CD8-positive, alpha-beta T cell (primary cell): ENCODE measurements at regions of chrX and their contacts with region 1.

Region 1: DNA sequence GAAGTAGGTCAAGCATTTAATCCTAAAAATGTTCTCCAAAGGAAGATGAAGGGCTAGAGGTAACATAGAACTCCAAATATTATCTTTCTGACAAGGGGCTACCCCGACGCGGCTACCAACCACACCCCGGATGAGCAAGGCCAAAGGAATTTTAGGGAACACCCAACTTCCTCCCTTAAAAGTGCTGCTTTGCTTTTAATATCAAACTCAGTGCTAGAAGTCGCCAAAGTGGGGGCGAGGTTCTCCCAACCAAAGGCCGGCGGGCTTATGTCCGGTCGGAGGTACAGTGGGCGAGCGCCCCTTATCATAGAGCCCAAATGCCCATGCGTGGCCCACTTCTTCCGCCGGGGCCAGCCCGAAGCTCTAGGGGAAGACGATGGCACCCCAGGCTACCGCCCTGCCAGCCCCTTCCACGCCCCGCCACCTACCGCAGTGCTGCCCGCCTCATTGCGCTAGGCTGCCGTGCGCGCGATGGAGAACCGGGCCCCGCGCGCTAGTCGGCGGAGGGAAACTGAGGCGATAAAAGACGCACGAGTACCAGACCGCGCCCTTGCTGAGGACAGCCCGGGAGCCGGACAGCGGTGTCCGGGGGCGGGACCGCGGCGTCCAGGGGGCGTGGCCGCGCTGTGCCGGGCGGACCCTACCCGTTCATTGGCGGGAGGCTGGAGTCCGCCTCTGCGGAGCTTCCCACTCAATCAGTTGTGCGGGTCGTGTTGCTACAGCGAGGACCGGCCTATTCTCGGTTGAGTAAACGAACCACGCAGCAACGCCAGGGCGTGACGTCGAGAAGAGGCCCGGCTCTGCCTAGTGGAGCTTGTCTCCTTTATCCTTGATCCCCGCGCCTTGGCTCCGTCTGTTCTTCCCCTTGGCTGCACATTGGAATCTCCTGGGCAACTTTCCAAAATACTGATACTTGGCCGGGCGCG is at the start of gene ACOT9:
- DNase-seq: peak; percentile 32 to 83 (median 60)
- ATAC-seq: peak; percentile 87
- H3K4me3 ChIP-seq: peak within 1 kb of the TSS; percentile 72 to 75
- H3K4me3 Mint-ChIP-seq: peak within 1 kb of the TSS; percentile 87
- H3K27ac ChIP-seq: peak within 1 kb of the TSS; percentile 51 to 66
- H3K27ac Mint-ChIP-seq: peak within 1 kb of the TSS; percentile 84
- H3K4me1 ChIP-seq: peaks cover 8% of the 10 kb centered on the region
- H3K4me1 Mint-ChIP-seq: peaks cover 35% of the 10 kb centered on the region
- H3K27me3 ChIP-seq: no peaks in the 10 kb centered on the region
- H3K27me3 Mint-ChIP-seq: no peaks in the 10 kb centered on the region
- CTCF ChIP-seq: no peak
- total RNA-seq, gene ACOT9: 19.3 to 21.3 TPM

Region 2: GRCh38 chrX:23633834-23634580 is 109.0 kb before region 1 on chrX:
- CTCF ChIA-PET with region 1: no interaction called
- POLR2A ChIA-PET with region 1: no interaction called
- intact Hi-C with region 1: no loop called
- DNase-seq: no peak
- ATAC-seq: no peak
- H3K4me3 ChIP-seq: no peak overlapping the region
- H3K4me3 Mint-ChIP-seq: no peak overlapping the region
- H3K27ac ChIP-seq: no peak overlapping the region
- H3K27ac Mint-ChIP-seq: no peak overlapping the region
- H3K4me1 ChIP-seq: no peaks in the 10 kb centered on the region
- H3K4me1 Mint-ChIP-seq: no peaks in the 10 kb centered on the region
- H3K27me3 ChIP-seq: no peaks in the 10 kb centered on the region
- H3K27me3 Mint-ChIP-seq: peaks cover 3% of the 10 kb centered on the region
- CTCF ChIP-seq: no peak

Region 3: GRCh38 chrX:23667239-23668177 is 75.5 kb before region 1 on chrX and contains the start of gene PRDX4:
- CTCF ChIA-PET with region 1: no interaction called
- POLR2A ChIA-PET with region 1: no interaction called
- intact Hi-C with region 1: loop called in 1 of 2 experiments (anchors 2 kb)
- DNase-seq: peak; percentile 37 to 84 (median 64)
- ATAC-seq: peak; percentile 85
- H3K4me3 ChIP-seq: peak within 1 kb of the TSS; percentile 62 to 67
- H3K4me3 Mint-ChIP-seq: peak within 1 kb of the TSS; percentile 92
- H3K27ac ChIP-seq: peak within 1 kb of the TSS; percentile 66 to 68
- H3K27ac Mint-ChIP-seq: peak within 1 kb of the TSS; percentile 86
- H3K4me1 ChIP-seq: peaks cover 11% of the 10 kb centered on the region
- H3K4me1 Mint-ChIP-seq: peaks cover 25% of the 10 kb centered on the region
- H3K27me3 ChIP-seq: no peaks in the 10 kb centered on the region
- H3K27me3 Mint-ChIP-seq: no peaks in the 10 kb centered on the region
- CTCF ChIP-seq: no peak
- total RNA-seq, gene PRDX4: 2.2 to 3.6 TPM